ENCODE measurements at regions of chr9 and their contacts with region 1.

Region 1: GRCh38 chr9:69237702-69238295 is 63.7 kb downstream of the TJP2 start:
- DNase-seq: no peak
- H3K4me3 ChIP-seq: no peak overlapping the region
- H3K27me3 ChIP-seq: no peaks in the 10 kb centered on the region
- CTCF ChIP-seq: no peak

Region 2: DNA sequence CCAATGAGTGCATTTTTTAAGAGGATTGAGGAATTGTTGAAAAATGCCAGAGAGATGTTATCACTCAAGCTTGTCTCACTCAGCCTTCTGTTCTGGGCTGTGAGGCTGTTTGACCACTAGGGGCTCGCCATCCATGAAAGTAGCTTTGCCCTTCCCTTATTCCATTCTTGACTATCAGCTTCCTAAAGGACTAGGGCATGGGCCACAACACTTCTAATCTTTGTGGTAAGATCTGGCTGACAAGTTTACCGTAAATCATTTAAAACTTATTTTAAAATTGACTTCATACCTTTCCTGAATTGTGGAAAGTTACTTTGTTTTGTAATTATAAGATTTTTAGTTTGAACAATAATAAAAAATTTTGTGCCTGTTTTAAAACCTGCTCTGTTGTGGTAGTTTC is 14.2 kb before region 1 on chr9:
- CTCF ChIA-PET with region 1: interaction called, 11 read pairs
- POLR2A ChIA-PET with region 1: no interaction called
- DNase-seq: peak; percentile 15
- H3K4me3 ChIP-seq: no peak overlapping the region
- H3K27me3 ChIP-seq: no peaks in the 10 kb centered on the region
- CTCF ChIP-seq: peak; percentile 78